Transverse colon (tissue), 4 donors: ENCODE measurements at regions of chr15 and their contacts with region 1.

Region 1: GRCh38 chr15:47206358-47206978 is 510.8 kb upstream of the SEMA6D start:
- DNase-seq: no peak
- H3K4me3 ChIP-seq: no peak overlapping the region
- H3K27ac ChIP-seq: no peak overlapping the region
- H3K4me1 ChIP-seq: no peaks in the 10 kb centered on the region
- H3K27me3 ChIP-seq: no peaks in the 10 kb centered on the region
- CTCF ChIP-seq: no peak
- EP300 ChIP-seq: no peak
- POLR2A ChIP-seq: no peak

Region 2: DNA sequence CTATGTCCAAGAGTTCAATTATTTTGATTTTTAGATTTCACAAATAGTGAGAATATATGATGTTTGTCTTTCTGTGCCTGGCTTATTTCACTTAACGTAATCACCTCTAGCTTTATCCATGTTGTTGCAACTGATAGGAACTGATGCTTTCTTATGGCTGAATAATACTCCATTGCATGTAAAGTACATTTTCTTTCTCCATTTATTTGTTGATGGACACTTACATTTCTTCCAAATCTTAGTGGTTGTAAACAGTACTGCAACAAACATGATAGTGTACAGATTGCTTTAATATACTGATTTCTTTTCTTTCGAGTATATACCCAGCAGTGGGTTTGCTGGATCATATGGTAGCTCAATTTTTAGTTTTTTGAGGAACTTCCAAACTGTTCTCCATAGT is 89.8 kb before region 1 on chr15:
- in situ Hi-C with region 1: no loop called
- intact Hi-C with region 1: no loop called
- DNase-seq: no peak
- H3K4me3 ChIP-seq: no peak overlapping the region
- H3K27ac ChIP-seq: no peak overlapping the region
- H3K4me1 ChIP-seq: no peaks in the 10 kb centered on the region
- H3K27me3 ChIP-seq: no peaks in the 10 kb centered on the region
- CTCF ChIP-seq: peak in 1 of 5 experiments; percentile 21
- EP300 ChIP-seq: no peak
- POLR2A ChIP-seq: no peak

Region 3: DNA sequence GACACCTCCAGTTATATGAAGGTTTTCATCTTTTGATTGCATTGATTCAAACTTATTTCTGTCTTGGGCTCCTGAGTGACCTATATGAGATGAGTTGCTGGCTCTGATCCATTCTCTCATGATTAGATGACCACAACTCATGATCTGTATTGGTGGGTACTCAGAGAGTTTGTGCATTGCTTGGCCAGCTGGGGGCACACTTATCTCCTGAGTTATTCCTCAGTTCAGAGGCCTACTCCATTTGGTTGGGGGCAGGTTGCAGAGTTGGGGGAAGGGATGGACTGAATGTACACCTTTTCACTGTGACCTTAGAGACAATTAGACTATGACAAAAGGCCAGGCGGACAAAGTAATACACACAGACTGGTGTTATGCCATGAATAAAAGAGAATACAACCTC is 344.6 kb after region 1 on chr15:
- in situ Hi-C with region 1: no loop called
- intact Hi-C with region 1: no loop called
- DNase-seq: no peak
- H3K4me3 ChIP-seq: no peak overlapping the region
- H3K27ac ChIP-seq: no peak overlapping the region
- H3K4me1 ChIP-seq: peaks cover 0 to 16% (median 2%) of the 10 kb centered on the region in 4 donors
- H3K27me3 ChIP-seq: no peaks in the 10 kb centered on the region
- CTCF ChIP-seq: no peak
- EP300 ChIP-seq: no peak
- POLR2A ChIP-seq: no peak

Region 4: DNA sequence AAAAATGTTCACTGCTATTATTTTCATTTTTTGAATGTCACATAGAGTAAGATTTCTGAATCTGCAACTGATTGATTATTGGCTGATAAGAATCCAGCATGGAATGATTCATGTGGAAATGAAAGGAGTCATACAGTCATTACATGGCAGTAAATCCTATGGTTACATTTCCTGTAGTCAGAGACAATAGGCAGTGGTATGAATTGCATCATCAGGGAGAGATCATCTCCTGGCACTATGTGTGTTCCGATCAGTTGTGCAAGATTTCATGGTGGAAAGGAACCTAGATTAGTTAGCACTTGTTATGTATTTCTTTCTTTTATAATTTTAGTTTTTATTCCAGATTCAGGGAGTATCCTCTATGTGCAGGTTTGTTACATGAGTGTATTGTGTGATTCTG is 1038.5 kb after region 1 on chr15:
- in situ Hi-C with region 1: loop called in 1 of 4 experiments (anchors 25 kb)
- intact Hi-C with region 1: no loop called
- DNase-seq: no peak
- H3K4me3 ChIP-seq: no peak overlapping the region
- H3K27ac ChIP-seq: no peak overlapping the region
- H3K4me1 ChIP-seq: no peaks in the 10 kb centered on the region
- H3K27me3 ChIP-seq: no peaks in the 10 kb centered on the region
- CTCF ChIP-seq: no peak
- EP300 ChIP-seq: no peak
- POLR2A ChIP-seq: no peak